ENCODE measurements at regions of chr21 and their contacts with region 1.

Region 1: GRCh38 chr21:44065428-44065827 is 41.8 kb upstream of the PWP2 start:
- DNase-seq: peak; percentile 67
- H3K4me3 Mint-ChIP-seq: peak overlapping the region; percentile 64
- H3K27ac Mint-ChIP-seq: peak overlapping the region; percentile 93
- H3K4me1 Mint-ChIP-seq: peaks cover 33% of the 10 kb centered on the region
- H3K27me3 Mint-ChIP-seq: no peaks in the 10 kb centered on the region

Region 2: GRCh38 chr21:44024887-44025362 is 40.5 kb before region 1 on chr21:
- intact Hi-C with region 1: loop called (anchors 2 kb)
- DNase-seq: no peak
- H3K4me3 Mint-ChIP-seq: no peak overlapping the region
- H3K27ac Mint-ChIP-seq: peak overlapping the region; percentile 64
- H3K4me1 Mint-ChIP-seq: peaks cover 45% of the 10 kb centered on the region
- H3K27me3 Mint-ChIP-seq: no peaks in the 10 kb centered on the region

Region 3: DNA sequence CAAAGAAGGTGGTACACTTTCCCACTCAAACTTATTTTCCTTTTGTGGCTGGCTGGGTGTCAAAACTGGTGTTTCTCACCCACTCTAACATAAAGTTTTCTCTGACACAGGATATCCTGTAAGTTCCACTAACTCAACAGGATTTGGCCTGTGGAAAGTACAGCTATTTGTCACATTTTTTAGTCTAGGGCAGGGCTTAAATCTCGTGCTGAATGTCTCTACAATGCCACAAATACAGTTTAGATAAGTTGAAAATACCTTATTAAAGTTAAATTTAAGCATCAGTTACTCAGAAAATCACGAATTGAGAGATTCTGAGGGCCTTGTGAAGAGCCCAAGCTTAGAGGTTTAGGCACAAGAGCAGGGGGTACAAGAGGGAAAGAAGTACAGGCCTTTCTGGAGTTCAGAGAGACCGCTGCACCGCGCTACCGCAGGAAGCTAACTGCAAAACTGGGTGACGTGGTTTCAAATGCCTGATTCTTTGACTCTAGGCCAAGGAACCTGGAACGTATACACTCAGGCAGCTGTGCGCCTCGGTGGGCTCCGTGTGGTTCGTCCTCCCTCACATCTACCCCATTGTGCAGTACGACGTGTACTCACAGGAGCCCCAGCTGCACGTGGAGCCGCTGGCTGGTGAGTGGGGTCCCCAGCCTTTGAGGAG is 18.3 kb after region 1 on chr21:
- intact Hi-C with region 1: loop called (anchors 2 kb)
- DNase-seq: peak; percentile 62
- H3K4me3 Mint-ChIP-seq: peak overlapping the region; percentile 57
- H3K27ac Mint-ChIP-seq: peak overlapping the region; percentile 95
- H3K4me1 Mint-ChIP-seq: peaks cover 64% of the 10 kb centered on the region
- H3K27me3 Mint-ChIP-seq: no peaks in the 10 kb centered on the region